Right ventricle myocardium superior (tissue), 1 donor: ENCODE measurements at regions of chr17 and their contacts with region 1.

Region 1: DNA sequence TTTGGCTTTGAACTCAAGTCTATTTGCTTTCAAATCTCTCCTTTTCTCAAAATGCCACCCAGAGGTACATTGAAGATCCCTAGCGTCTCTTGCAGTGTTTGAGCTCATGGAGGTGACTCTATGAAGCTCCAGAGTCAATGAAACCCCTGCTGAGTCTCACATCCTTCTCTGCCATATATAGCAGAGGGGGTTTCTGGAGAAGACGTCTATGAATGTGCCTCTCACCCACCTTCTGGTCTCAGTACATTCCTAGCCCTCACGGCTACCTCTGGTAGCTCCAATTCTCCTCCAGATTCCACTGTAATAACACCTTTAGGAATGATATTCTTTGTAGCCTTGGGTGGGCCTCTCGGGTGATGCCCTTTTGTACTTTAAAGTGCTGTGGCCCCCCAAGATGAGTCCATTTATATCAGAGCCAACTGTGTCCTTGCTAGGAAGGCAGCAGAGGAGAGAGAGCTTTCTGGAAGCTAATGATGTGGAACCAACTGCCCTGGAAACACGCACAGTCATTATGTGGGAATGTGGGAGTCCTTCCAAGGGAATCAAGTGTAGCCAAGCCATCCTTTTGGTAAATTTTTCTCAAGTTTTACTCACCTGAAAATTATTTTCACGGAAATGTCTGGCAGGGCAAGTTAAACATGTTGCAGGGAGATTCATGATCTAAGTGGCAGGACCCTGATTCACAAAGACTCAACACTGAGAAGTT is 123.4 kb downstream of the ASIC2 start:
- DNase-seq: no peak
- ATAC-seq: no peak

Region 2: GRCh38 chr17:33113276-33113990 is 56.3 kb before region 1 on chr17:
- intact Hi-C with region 1: loop called (anchors 10 kb)
- DNase-seq: no peak
- ATAC-seq: no peak